AG04449 (cell line): ENCODE measurements at regions of chr12 and their contacts with region 1.

Region 1: GRCh38 chr12:7995266-7995963 is 37.1 kb upstream of the FOXJ2 start:
- DNase-seq: peak; percentile 65
- H3K4me3 ChIP-seq: no peak overlapping the region; the same call in 1 of the 2 replicates
- CTCF ChIP-seq: peak; percentile 58

Region 2: DNA sequence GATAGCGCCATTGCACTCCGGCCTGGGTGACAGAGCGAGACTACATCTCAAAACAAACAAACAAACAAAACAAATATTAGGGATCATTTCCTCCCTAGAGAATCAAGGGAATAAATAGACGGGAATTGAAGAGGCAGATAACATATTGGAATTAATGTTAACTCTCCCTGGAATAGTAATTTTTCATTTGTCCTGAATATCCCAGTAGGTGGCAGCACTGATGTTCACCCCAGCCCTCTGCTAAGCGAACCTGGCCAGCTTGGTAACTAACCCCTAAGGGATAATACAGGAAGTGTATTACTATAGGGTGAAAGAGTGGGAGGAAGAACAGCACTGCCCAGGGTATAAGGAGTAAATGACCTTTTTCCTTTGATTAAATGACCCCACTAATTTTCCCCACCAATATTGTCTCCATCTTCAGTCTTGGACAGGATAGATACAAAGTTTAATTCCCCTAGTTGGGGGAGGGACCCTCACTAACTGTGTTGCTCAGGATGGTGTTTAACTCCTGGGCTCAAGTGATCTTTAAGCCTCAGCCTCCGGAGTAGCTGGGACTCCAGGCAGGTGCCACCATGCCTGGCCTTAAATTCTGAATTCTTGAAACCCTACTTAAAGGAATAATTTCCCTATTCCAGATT is 163.2 kb before region 1 on chr12:
- CTCF ChIA-PET with region 1: interaction called, 19 read pairs
- POLR2A ChIA-PET with region 1: no interaction called
- DNase-seq: peak; percentile 34
- H3K4me3 ChIP-seq: no peak overlapping the region
- CTCF ChIP-seq: peak; percentile 64

Region 3: GRCh38 chr12:7859552-7859951 is 135.9 kb before region 1 on chr12:
- CTCF ChIA-PET with region 1: interaction called, 13 read pairs
- POLR2A ChIA-PET with region 1: interaction called, 3 read pairs
- DNase-seq: no peak
- H3K4me3 ChIP-seq: peak overlapping the region; percentile 16
- CTCF ChIP-seq: no peak

Region 4: GRCh38 chr12:7959701-7960121 is 35.7 kb before region 1 on chr12:
- CTCF ChIA-PET with region 1: interaction called, 15 read pairs
- POLR2A ChIA-PET with region 1: interaction called, 3 read pairs
- DNase-seq: no peak
- H3K4me3 ChIP-seq: no peak overlapping the region
- CTCF ChIP-seq: no peak

Region 5: GRCh38 chr12:7981446-7981845 is 14.0 kb before region 1 on chr12:
- CTCF ChIA-PET with region 1: interaction called, 38 read pairs
- POLR2A ChIA-PET with region 1: no interaction called
- DNase-seq: no peak
- H3K4me3 ChIP-seq: no peak overlapping the region
- CTCF ChIP-seq: no peak